Activated B cell treated with CpG ODN at 0.5 μM for 24 hours (primary cell): ENCODE measurements at regions of chr1 and their contacts with region 1.

Region 1: DNA sequence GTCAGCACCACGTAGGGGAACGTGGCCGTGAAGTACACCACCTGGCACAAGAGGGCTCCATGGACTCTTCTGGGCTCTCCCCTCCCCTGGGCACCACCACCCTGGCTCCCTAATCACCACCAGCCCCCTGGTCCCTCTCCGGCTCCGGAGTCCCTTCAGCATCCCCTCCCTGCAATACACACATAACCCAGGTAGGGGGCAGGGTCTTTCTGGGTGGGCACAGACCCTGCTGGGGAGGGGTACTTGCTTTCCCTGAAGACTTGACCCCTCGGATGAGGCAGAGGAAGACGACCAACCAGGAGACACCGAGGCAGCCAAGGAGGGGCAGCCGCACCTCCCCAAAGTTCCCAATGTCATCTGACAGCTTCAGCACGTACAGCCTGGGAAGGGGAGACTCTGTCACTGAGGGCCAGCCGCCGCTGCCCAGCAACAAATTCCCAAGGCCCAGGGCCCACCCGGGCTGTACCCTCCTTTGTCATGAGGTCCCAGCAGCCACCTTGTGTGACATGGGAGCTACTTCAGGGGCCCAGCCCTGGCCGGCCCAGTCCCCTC is 11.3 kb downstream of the CCDC24 start:
- DNase-seq: no peak
- ATAC-seq: no peak
- H3K4me3 Mint-ChIP-seq: no peak overlapping the region
- H3K27ac Mint-ChIP-seq: no peak overlapping the region
- H3K4me1 Mint-ChIP-seq: no peaks in the 10 kb centered on the region
- H3K27me3 Mint-ChIP-seq: no peaks in the 10 kb centered on the region
- CTCF ChIP-seq: no peak

Region 2: GRCh38 chr1:43958351-43959255 is 44.1 kb before region 1 on chr1:
- CTCF ChIA-PET with region 1: no interaction called
- POLR2A ChIA-PET with region 1: no interaction called
- intact Hi-C with region 1: no loop called
- DNase-seq: no peak
- ATAC-seq: no peak
- H3K4me3 Mint-ChIP-seq: no peak overlapping the region
- H3K27ac Mint-ChIP-seq: no peak overlapping the region
- H3K4me1 Mint-ChIP-seq: no peaks in the 10 kb centered on the region
- H3K27me3 Mint-ChIP-seq: no peaks in the 10 kb centered on the region
- CTCF ChIP-seq: no peak

Region 3: GRCh38 chr1:43991476-43992231 is 11.0 kb before region 1 on chr1 and contains the start of gene CCDC24:
- CTCF ChIA-PET with region 1: interaction called, 17 read pairs
- POLR2A ChIA-PET with region 1: interaction called, 5 read pairs
- intact Hi-C with region 1: no loop called
- DNase-seq: peak; percentile 82
- ATAC-seq: peak; percentile 86
- H3K4me3 Mint-ChIP-seq: peak within 1 kb of the TSS; percentile 96
- H3K27ac Mint-ChIP-seq: peak within 1 kb of the TSS; percentile 88
- H3K4me1 Mint-ChIP-seq: peaks cover 36% of the 10 kb centered on the region
- H3K27me3 Mint-ChIP-seq: no peaks in the 10 kb centered on the region
- CTCF ChIP-seq: no peak
- total RNA-seq, gene CCDC24: 8.1 and 15.1 TPM in 2 replicates

Region 4: GRCh38 chr1:44029906-44030604 is 27.4 kb after region 1 on chr1:
- CTCF ChIA-PET with region 1: interaction called, 150 read pairs
- POLR2A ChIA-PET with region 1: interaction called, 4 read pairs
- intact Hi-C with region 1: loop called (anchors 1 kb)
- DNase-seq: peak; percentile 93
- ATAC-seq: peak; percentile 76
- H3K4me3 Mint-ChIP-seq: peak overlapping the region; percentile 95
- H3K27ac Mint-ChIP-seq: peak overlapping the region; percentile 97
- H3K4me1 Mint-ChIP-seq: peaks cover 32% of the 10 kb centered on the region
- H3K27me3 Mint-ChIP-seq: no peaks in the 10 kb centered on the region
- CTCF ChIP-seq: no peak

Region 5: GRCh38 chr1:44036409-44037139 is 33.9 kb after region 1 on chr1:
- CTCF ChIA-PET with region 1: interaction called, 150 read pairs
- POLR2A ChIA-PET with region 1: interaction called, 3 read pairs
- intact Hi-C with region 1: loop called (anchors 1 kb)
- DNase-seq: peak; percentile 50
- ATAC-seq: peak; percentile 92
- H3K4me3 Mint-ChIP-seq: no peak overlapping the region
- H3K27ac Mint-ChIP-seq: no peak overlapping the region
- H3K4me1 Mint-ChIP-seq: peaks cover 6% of the 10 kb centered on the region
- H3K27me3 Mint-ChIP-seq: no peaks in the 10 kb centered on the region
- CTCF ChIP-seq: no peak

Region 6: DNA sequence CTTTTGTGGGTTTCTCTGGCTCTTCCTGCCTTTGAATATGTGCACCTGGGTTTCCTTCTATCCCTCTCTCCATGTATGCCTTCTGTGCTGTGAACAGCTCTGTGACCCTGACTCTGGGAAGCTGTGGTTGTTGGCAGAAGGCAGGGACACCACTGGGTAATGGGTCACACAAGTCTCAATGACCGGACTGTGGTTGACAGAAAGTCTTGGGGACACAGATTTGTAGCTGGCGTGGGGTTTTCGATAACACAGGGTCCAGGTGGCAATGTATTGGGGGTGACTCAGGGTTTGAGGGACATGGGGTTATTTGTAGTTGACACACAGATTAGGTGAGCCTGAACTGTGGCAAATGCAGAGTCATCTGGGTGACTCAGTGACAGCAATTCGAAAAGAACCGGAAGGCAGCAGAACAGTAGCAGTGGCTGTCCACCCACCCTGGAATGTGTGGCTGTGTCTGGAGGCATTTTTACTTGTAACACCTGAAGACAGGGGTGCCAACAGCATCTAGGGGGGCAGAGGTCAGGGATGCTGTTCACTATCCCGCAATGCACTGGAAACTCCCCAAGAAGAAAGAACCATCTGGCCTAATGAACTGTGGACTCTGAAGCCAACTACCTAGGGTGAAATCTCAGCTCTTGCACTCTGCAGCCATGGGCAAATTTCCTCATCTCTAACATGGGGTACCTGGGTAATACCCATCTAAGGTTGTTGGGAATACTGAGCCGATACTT is 41.6 kb after region 1 on chr1:
- CTCF ChIA-PET with region 1: interaction called, 49 read pairs
- POLR2A ChIA-PET with region 1: interaction called, 3 read pairs
- intact Hi-C with region 1: loop called (anchors 1 kb)
- DNase-seq: no peak
- ATAC-seq: no peak
- H3K4me3 Mint-ChIP-seq: no peak overlapping the region
- H3K27ac Mint-ChIP-seq: no peak overlapping the region
- H3K4me1 Mint-ChIP-seq: peaks cover 8% of the 10 kb centered on the region
- H3K27me3 Mint-ChIP-seq: peaks cover 13% of the 10 kb centered on the region
- CTCF ChIP-seq: no peak

Region 7: DNA sequence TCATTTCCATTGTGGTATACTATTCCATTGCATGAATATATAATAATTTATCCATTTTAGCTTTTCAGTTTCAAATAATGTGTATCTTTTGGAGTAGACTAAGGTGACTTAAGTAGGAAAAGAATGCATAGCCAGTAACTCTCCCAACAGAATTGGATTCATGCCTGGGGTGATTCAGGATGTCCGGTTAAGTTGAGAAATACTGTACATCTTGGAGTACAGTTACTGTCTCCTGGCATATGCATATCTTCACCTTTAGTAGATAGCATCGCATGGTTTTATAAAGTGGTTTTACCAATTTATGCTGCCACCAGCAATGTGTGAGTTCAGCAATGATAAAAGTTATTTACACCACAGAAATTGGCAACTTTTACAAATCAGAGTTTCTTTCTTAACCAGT is 47.2 kb after region 1 on chr1:
- CTCF ChIA-PET with region 1: interaction called, 49 read pairs
- POLR2A ChIA-PET with region 1: interaction called, 3 read pairs
- intact Hi-C with region 1: loop called (anchors 1 kb)
- DNase-seq: no peak
- ATAC-seq: no peak
- H3K4me3 Mint-ChIP-seq: no peak overlapping the region
- H3K27ac Mint-ChIP-seq: no peak overlapping the region
- H3K4me1 Mint-ChIP-seq: peaks cover 2% of the 10 kb centered on the region
- H3K27me3 Mint-ChIP-seq: peaks cover 13% of the 10 kb centered on the region
- CTCF ChIP-seq: no peak